ENCODE measurements at regions of chr2 and their contacts with region 1.

Region 1: DNA sequence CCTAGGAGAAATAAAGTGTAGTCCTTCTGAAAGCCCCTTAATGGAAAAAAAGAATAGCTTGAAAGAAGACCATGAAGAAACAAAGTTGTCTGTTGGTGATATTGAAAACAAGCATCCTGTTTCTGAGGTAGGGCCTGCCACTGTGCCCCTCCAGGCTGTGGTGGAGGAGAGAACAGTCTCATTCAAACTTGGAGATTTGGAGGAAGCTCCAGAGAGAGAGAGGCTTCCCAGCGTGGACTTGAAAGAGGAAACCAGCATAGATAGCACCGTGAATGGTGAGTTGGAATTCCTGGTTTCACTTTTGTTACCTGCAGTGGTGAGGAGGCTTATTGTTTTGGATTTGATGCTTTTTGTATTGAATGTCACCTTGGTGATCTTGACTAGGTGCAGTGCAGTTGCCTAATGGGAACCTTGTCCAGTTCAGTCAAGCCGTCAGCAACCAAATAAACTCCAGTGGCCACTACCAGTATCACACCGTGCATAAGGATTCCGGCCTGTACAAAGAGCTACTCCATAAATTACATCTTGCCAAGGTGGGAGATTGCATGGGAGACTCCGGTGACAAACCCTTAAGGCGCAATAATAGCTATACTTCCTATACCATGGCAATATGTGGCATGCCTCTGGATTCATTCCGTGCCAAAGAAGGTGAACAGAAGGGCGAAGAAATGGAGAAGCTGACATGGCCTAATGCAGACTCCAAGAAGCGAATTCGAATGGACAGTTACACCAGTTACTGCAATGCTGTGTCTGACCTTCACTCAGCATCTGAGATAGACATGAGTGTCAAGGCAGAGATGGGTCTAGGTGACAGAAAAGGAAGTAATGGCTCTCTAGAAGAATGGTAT is 13.3 kb downstream of the SLC20A1 start:
- DNase-seq: peak; percentile 25
- ATAC-seq: 0 out of 2 replicates have a peak, but pooled peaks have one; percentile 4
- H3K4me3 ChIP-seq: no peak overlapping the region
- H3K27ac ChIP-seq: no peak overlapping the region
- H3K4me1 ChIP-seq: peaks cover 40% of the 10 kb centered on the region
- H3K27me3 ChIP-seq: no peaks in the 10 kb centered on the region
- CTCF ChIP-seq: no peak

Region 2: DNA sequence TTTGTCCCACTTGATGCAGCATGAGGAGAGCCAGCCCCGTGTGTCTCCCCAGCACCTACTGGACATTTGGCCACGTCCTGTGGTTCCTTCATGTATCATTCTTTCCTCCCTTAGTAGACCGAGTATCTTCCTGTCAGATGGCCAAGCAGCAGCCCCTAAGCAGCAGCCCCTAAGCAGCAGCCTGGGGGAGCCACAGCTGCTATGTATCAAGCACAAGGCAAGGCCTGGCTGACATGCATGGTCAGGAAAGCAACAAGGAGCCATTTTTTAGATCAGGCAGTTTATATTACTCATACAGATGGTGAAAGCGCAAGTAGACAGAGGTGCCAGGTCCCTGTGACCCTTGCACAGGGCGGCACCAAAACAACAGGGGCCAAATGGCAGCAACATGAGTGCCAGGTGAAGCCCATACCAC is 52.5 kb before region 1 on chr2:
- CTCF ChIA-PET with region 1: no interaction called
- POLR2A ChIA-PET with region 1: no interaction called
- intact Hi-C with region 1: loop called (anchors 10 kb)
- DNase-seq: no peak
- ATAC-seq: no peak
- H3K4me3 ChIP-seq: no peak overlapping the region
- H3K27ac ChIP-seq: no peak overlapping the region
- H3K4me1 ChIP-seq: no peaks in the 10 kb centered on the region
- H3K27me3 ChIP-seq: no peaks in the 10 kb centered on the region
- CTCF ChIP-seq: no peak

Region 3: DNA sequence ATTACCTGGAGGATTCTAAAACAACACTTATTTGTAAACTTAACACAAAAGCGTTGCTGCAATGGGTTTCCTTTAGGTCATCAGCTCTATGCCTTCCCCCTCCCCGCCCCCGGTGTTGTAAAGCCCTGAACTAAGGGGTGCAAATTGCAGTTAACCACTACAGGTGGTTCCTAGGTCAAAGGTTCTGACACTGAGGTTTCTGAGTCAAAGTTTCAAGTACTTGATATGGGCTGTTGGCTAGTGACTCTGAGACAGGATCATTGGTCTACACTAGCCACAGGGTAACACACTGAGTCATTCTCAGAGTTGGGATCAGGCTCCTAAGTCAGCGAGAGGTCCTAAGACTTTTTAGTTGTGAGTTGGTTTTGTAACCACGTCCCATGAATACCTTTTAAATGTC is 162.1 kb after region 1 on chr2:
- CTCF ChIA-PET with region 1: no interaction called
- POLR2A ChIA-PET with region 1: no interaction called
- intact Hi-C with region 1: no loop called
- DNase-seq: no peak
- ATAC-seq: no peak
- H3K4me3 ChIP-seq: no peak overlapping the region
- H3K27ac ChIP-seq: no peak overlapping the region
- H3K4me1 ChIP-seq: peaks cover 9% of the 10 kb centered on the region
- H3K27me3 ChIP-seq: no peaks in the 10 kb centered on the region
- CTCF ChIP-seq: no peak

Measured in PC-3 (cell line).